Mammary epithelial cell (primary cell): ENCODE measurements at regions of chr4 and their contacts with region 1.

Region 1: DNA sequence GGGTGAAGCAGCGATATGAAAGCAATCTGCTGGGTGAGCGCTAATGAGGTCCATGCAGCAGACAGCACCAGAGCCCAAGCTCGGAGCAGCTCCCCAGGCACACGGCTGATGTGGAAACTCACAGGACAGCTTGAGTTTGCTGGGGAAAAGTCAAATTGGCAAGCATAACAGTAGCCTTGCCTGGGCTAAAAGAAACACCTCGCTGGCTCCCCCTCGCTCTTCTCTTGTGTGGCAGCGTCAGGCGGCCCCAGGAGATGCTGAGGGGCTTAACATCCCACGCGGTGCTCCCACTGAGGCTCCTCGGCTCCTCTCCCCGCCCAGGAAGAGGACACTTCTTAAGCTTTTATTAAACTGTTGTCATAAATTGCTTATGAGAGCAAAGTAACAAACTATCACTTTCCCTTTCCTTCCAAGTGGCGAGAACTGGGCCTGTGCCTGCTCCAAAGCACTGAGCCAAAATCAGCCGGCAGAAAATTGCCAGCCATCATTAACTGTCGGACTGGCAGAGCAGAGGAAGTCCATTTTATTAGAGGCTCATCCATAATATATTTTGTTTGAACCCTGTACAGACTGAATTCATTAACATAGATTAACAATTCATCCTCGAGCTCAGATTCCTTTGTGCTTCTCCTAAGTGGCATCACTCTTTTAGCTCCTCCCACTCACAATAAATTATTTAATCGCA is 111.4 kb downstream of the TSPAN5 start:
- DNase-seq: peak; percentile 30
- H3K4me3 ChIP-seq: peak overlapping the region; percentile 38 to 45 (median 42)
- H3K27ac ChIP-seq: peak overlapping the region; percentile 38
- H3K4me1 ChIP-seq: peaks cover 11% of the 10 kb centered on the region
- H3K27me3 ChIP-seq: no peaks in the 10 kb centered on the region
- CTCF ChIP-seq: peak in 1 of 2 donors; percentile 16

Region 2: DNA sequence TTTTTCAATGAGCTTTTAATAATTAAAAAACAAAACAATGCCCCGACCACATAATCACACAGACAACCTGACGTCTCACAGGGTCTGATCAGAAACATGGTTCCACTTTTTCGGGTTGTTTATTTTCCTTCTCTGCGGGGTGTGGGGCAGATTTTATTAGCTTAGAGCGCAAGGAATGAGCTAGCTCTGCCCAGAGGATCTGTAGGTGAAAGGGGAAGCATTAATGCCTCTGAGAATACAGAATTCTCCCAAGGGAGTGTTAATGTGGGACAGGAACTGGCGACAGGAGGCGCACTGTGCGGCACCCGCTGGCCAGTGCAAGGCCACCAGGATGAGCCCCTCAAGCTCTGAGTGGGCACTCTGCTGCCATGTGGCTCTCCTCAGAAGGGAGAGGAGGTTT is 70.2 kb before region 1 on chr4:
- CTCF ChIA-PET with region 1: no interaction called
- dilution Hi-C with region 1: no loop called
- in situ Hi-C with region 1: no loop called
- intact Hi-C with region 1: no loop called
- DNase-seq: no peak
- H3K4me3 ChIP-seq: no peak overlapping the region
- H3K27ac ChIP-seq: no peak overlapping the region
- H3K4me1 ChIP-seq: peaks cover 52% of the 10 kb centered on the region
- H3K27me3 ChIP-seq: no peaks in the 10 kb centered on the region
- CTCF ChIP-seq: no peak

Region 3: GRCh38 chr4:98794565-98795205 is 247.6 kb after region 1 on chr4:
- CTCF ChIA-PET with region 1: no interaction called
- dilution Hi-C with region 1: no loop called
- in situ Hi-C with region 1: no loop called
- intact Hi-C with region 1: loop called (anchors 10 kb)
- DNase-seq: peak; percentile 97
- H3K4me3 ChIP-seq: no peak overlapping the region
- H3K27ac ChIP-seq: peak overlapping the region; percentile 83
- H3K4me1 ChIP-seq: peaks cover 23% of the 10 kb centered on the region
- H3K27me3 ChIP-seq: no peaks in the 10 kb centered on the region
- CTCF ChIP-seq: no peak